ENCODE measurements at regions of chr12 and their contacts with region 1.

Region 1: GRCh38 chr12:95220731-95221130 is 3.1 kb downstream of the VEZT start:
- DNase-seq: no peak

Region 2: DNA sequence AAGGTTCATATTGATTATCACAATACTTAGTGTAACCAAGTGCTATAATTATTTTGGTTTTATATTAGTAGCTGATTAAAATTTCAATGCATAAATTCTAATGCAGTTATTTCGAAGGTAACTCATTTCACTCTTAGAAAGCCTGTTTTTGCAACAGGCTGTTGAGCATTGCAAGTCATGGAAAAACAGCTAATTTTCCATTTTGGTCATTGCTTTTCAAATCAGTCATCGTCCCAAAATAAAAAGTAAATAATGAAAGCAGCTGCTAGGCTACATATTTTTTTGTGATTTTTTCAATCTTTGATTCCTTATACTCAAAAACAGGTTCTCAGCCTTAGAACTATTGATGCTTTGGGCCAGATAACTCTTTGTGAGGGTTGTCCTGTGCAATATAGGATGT is 19.8 kb after region 1 on chr12:
- intact Hi-C with region 1: loop called in 1 of 2 experiments (anchors 1 kb)
- DNase-seq: no peak

Measured in posterior vena cava (tissue), 2 donors.